A549 (cell line): ENCODE measurements at regions of chr2 and their contacts with region 1.

Region 1: DNA sequence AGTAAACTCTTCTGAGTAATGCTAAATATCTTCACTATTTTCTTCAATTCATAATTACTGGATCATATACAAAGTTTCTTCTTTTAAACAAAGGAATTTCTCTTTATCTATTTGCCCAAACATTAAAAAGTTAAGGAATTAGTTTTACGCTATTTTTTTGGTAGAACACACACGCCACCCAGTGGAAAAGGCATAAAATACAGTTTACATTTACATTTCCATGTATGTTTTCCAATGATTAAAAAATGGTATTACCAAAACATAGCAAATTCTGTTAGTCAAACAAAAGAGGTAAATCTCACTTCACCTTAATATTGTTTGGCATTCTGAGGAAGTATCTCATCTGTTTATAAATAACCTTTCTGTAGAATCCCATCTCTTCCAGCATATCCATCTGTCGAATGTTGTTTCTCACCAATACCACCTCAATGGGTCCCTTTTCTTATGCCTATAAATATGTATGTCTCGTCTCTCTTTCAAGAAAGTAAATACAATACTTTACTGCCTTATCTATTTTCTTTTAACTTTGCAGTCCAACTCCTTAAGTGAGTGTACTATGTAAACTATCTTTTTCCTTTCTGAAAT is 7.2 kb downstream of the BOLL start:
- DNase-seq: peak; percentile 4 to 38
- ATAC-seq: no peak
- H3K4me3 ChIP-seq: no peak overlapping the region
- H3K27ac ChIP-seq: no peak overlapping the region
- H3K4me1 ChIP-seq: no peaks in the 10 kb centered on the region
- CTCF ChIP-seq: peak; percentile 89
- EP300 ChIP-seq: no peak
- POLR2A ChIP-seq: no peak
- RAD21 ChIP-seq: peak; percentile 87 to 94

Region 2: GRCh38 chr2:197591339-197592072 is 186.4 kb before region 1 on chr2:
- CTCF ChIA-PET with region 1: interaction called, 15 read pairs
- POLR2A ChIA-PET with region 1: no interaction called
- DNase-seq: peak in 1 of 2 experiments; percentile 69
- ATAC-seq: peak; percentile 98 to 100
- H3K4me3 ChIP-seq: peak overlapping the region; percentile 44
- H3K27ac ChIP-seq: peak overlapping the region; percentile 54 to 80
- H3K4me1 ChIP-seq: peaks cover 4% of the 10 kb centered on the region; the same call in 1 of the 3 replicates
- CTCF ChIP-seq: peak; percentile 35
- EP300 ChIP-seq: no peak
- POLR2A ChIP-seq: no peak
- RAD21 ChIP-seq: peak; percentile 46 to 51; a peak in 4 of 5 replicates

Region 3: GRCh38 chr2:197705121-197705911 is 72.6 kb before region 1 on chr2 and contains the start of gene MARS2:
- CTCF ChIA-PET with region 1: interaction called, 10 read pairs
- POLR2A ChIA-PET with region 1: no interaction called
- DNase-seq: peak; percentile 74 to 92
- ATAC-seq: peak; percentile 89 to 92
- H3K4me3 ChIP-seq: peak within 1 kb of the TSS; percentile 64
- H3K27ac ChIP-seq: peak within 1 kb of the TSS; percentile 72 to 87
- H3K4me1 ChIP-seq: peaks cover 30% of the 10 kb centered on the region
- CTCF ChIP-seq: no peak
- EP300 ChIP-seq: no peak
- POLR2A ChIP-seq: peak; percentile 97
- RAD21 ChIP-seq: 0 out of 5 replicates have a peak, but pooled peaks of 1 of the 2 experiments have one; percentile 8
- polyA plus RNA-seq, gene MARS2: 10.9 and 11.6 TPM in 2 replicates

Region 4: GRCh38 chr2:197728338-197729207 is 49.3 kb before region 1 on chr2:
- CTCF ChIA-PET with region 1: no interaction called
- POLR2A ChIA-PET with region 1: no interaction called
- DNase-seq: no peak
- ATAC-seq: no peak
- H3K4me3 ChIP-seq: no peak overlapping the region
- H3K27ac ChIP-seq: no peak overlapping the region
- H3K4me1 ChIP-seq: no peaks in the 10 kb centered on the region
- CTCF ChIP-seq: no peak
- EP300 ChIP-seq: no peak
- POLR2A ChIP-seq: no peak
- RAD21 ChIP-seq: no peak

Region 5: DNA sequence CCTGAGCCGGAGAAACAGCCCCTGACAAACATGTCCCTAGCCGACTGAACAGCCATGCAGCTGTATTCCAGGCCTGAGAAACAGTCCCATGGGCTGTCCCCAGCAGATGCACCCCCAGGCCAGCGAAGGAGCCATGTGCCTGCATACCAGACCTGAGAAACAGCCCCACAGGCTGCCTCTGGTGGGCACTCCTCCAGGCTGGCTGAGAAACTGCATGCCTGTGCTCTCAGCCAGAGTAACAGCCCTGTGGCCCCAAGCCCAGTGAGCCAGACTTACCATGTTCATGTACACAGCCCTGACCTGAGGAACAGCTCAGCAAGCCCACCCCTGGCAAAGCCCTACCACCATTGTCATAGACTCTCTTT is 17.6 kb before region 1 on chr2:
- CTCF ChIA-PET with region 1: no interaction called
- POLR2A ChIA-PET with region 1: no interaction called
- DNase-seq: no peak
- ATAC-seq: no peak
- H3K4me3 ChIP-seq: no peak overlapping the region
- H3K27ac ChIP-seq: no peak overlapping the region
- H3K4me1 ChIP-seq: no peaks in the 10 kb centered on the region
- CTCF ChIP-seq: no peak
- EP300 ChIP-seq: no peak
- POLR2A ChIP-seq: no peak
- RAD21 ChIP-seq: no peak